Calu3 (cell line): ENCODE measurements at regions of chr3 and their contacts with region 1.

Region 1: DNA sequence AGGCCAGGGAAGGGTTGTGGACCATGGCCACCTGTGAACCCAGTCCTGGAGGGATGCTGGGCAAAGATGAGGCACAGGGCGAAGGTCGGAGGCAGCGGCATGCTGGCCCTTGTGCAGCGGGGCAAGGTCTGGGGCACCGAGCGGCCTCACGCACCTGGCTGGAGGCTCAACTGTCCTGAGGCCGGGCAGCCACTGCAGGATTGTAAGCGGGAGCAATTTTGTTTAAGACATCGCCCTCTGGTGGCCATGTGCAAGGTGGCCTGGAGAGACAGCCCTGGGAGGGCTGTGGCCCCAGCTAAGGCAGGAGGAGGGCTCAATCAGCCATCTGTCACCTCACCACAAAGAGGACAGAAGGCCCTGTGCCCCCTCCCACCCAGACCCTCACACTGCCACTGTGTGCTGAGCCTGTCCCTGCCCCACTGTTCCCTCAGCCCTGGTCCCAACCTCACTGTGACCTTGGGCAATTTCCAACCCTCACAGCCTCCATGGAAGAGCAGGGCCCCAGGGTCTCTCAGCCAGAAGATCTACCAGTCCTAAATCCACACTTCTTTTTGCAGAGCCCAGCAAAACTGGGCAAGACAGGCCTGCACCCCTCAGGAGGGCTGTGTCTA is 46.2 kb downstream of the TPRA1 start:
- DNase-seq: peak; percentile 92
- H3K4me3 Mint-ChIP-seq: no peak overlapping the region
- H3K27ac Mint-ChIP-seq: no peak overlapping the region
- H3K4me1 Mint-ChIP-seq: peaks cover 7% of the 10 kb centered on the region
- H3K27me3 Mint-ChIP-seq: peaks cover 59% of the 10 kb centered on the region
- CTCF ChIP-seq: peak; percentile 96

Region 2: GRCh38 chr3:127254730-127255129 is 289.6 kb before region 1 on chr3:
- CTCF ChIA-PET with region 1: no interaction called
- intact Hi-C with region 1: loop called (anchors 5 kb)
- DNase-seq: peak; percentile 57
- H3K4me3 Mint-ChIP-seq: no peak overlapping the region
- H3K27ac Mint-ChIP-seq: no peak overlapping the region
- H3K4me1 Mint-ChIP-seq: no peaks in the 10 kb centered on the region
- H3K27me3 Mint-ChIP-seq: peaks cover 81% of the 10 kb centered on the region
- CTCF ChIP-seq: peak; percentile 60